ENCODE measurements at regions of chrX and their contacts with region 1.

Region 1: GRCh38 chrX:66728818-66729271 is 90.0 kb upstream of the EDA2R start:
- DNase-seq: peak; percentile 58
- H3K4me3 Mint-ChIP-seq: peak overlapping the region; percentile 91
- H3K27ac Mint-ChIP-seq: peak overlapping the region; percentile 86
- H3K4me1 Mint-ChIP-seq: peaks cover 2% of the 10 kb centered on the region
- H3K27me3 Mint-ChIP-seq: no peaks in the 10 kb centered on the region

Region 2: DNA sequence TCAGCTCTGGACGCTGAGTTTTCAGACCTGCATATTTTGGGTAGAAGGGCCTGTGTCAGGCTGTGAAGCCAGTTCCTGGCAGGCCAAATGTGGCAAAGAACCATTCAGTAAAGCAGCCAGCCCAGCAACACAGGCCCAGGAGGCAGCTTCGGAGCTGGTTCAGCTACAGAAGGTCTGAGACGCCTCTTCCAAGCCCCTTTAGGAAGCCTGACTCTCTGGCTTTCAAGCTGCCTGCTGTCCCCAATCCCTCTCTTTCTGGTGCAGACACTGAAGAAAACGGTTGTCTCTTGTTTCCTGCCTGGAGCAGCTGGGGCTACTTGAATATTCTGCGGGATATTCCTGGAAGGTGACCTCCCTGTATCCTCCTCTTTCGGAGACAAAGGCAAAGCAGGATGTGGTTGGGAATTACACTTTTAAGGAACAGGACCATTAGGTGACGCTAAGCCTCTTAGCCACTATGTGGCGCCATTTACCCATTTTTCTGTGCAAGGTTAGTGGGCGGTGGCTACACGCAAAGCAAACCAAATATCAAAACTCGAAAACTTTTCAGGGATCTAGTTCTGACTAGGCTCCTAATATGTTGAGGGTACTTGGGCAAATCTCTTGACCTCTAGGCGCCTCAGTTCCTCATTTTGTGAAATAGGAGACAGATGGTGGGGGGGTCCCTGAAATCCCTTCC is 1147.0 kb before region 1 on chrX:
- CTCF ChIA-PET with region 1: interaction called, 12 read pairs
- POLR2A ChIA-PET with region 1: no interaction called
- intact Hi-C with region 1: loop called (anchors 5 kb)
- DNase-seq: peak; percentile 63
- H3K4me3 Mint-ChIP-seq: no peak overlapping the region
- H3K27ac Mint-ChIP-seq: no peak overlapping the region
- H3K4me1 Mint-ChIP-seq: peaks cover 3% of the 10 kb centered on the region
- H3K27me3 Mint-ChIP-seq: no peaks in the 10 kb centered on the region

Region 3: DNA sequence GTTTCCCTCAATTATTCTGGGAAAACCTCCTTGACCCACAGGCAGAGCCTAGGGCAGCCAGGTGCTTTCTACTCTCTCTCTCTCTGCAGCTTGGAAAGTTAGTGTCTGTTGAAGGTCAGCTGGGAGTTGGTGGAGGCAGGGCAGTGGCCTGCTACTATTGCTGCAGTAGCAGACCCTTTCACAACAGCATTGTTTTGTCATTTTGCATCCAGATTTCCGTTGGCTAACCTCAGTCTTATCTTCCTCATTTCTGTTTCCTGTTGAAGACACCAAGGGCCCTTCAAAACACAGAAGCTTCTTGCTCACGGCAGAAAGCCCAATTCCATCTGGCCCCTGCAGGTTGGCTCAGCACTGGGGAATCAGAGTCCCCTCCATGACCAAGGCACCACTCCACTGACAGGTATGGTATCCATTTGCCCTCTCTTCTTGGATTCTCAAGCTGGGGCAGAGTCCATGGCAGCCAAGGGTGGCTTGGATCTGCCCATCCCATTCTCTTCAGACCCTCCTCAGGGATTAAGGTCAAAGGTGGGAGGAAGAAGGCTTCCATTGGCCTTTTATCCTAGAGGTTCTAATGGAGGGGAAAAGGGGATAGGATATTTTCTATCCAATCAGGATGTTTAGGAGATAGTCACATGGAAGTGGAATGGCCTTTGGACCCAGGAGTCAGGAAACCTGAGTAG is 713.6 kb before region 1 on chrX:
- CTCF ChIA-PET with region 1: interaction called, 3 read pairs
- POLR2A ChIA-PET with region 1: no interaction called
- intact Hi-C with region 1: loop called (anchors 10 kb)
- DNase-seq: peak; percentile 17
- H3K4me3 Mint-ChIP-seq: no peak overlapping the region
- H3K27ac Mint-ChIP-seq: peak overlapping the region; percentile 28
- H3K4me1 Mint-ChIP-seq: peaks cover 68% of the 10 kb centered on the region
- H3K27me3 Mint-ChIP-seq: no peaks in the 10 kb centered on the region

Region 4: DNA sequence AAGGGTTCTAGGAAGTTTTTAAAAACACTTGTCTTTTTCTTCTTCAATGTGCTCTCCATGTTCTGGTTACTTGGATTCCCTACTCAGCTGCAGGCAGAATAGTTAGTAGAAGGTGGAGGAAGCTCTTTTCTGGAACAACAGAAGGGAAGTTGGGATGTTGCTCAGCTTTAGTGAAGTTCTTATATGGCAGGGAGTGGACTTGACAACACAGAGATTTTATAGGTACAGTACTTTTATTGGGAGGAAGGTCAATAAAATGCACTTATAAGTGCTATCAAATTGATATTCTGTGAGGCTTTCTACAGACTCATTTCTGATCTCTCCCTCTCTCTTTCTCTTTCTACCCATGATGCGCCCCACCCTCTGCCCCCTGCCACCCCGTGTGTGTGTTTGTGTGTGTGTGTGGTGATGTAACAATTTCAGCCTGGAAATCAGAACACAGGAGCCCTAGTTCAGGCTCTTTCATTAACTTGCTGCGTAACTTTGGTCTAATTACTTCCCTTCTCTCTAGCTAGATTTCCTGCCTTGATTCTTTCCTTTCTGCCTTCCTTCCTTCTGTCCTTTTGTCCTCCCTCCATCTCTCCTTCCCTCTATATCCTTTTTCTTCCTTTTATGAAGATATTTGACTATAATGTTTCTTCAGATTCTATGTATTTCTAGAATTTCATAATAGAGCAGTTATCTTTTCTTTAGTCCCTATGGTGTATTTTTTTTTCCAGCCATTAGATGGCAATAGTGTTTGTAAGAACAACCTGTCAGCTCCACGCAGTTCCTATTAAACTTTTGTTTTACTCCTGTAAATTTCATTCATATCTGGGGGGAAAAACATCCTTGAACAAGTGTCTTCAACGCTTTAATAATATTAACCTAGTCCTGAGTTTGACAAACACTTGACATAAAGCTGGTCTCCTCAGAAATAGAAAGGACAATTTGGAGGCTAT is 527.7 kb before region 1 on chrX:
- CTCF ChIA-PET with region 1: interaction called, 6 read pairs
- POLR2A ChIA-PET with region 1: no interaction called
- intact Hi-C with region 1: loop called (anchors 1 kb)
- DNase-seq: no peak
- H3K4me3 Mint-ChIP-seq: no peak overlapping the region
- H3K27ac Mint-ChIP-seq: no peak overlapping the region
- H3K4me1 Mint-ChIP-seq: peaks cover 17% of the 10 kb centered on the region
- H3K27me3 Mint-ChIP-seq: no peaks in the 10 kb centered on the region